Cardiac septum (tissue), 1 donor: ENCODE measurements at regions of chr6 and their contacts with region 1.

Region 1: GRCh38 chr6:2791124-2791974 is 26.2 kb downstream of the WRNIP1 start:
- DNase-seq: peak; percentile 87

Region 2: GRCh38 chr6:2841264-2842138 is 50.2 kb after region 1 on chr6 and contains the start of gene SERPINB1:
- intact Hi-C with region 1: loop called (anchors 1 kb)
- DNase-seq: peak; percentile 97
- total RNA-seq, gene SERPINB1: 26.4 TPM